ENCODE measurements at regions of chr2 and their contacts with region 1.

Region 1: DNA sequence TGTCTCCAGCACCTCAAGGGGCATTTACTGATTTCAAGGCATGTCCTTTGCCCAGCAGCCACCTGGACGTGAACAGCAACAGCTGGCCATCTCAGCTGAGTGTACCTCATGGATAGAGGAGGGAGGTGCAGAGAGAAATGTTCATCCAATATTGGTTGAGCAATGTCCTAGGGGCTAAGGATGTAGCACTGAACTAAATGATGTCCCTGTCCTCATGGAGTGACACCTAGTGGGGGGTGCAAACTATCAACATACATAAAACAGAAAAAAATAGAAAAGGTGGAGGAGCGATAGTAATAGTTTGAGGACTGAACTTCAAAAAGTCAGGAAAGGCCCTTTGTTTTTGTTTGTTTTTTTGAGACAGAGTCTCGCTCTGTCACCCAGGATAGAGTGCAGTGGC is 4.8 kb upstream of the UGGT1 start:
- DNase-seq: no peak
- ATAC-seq: no peak
- H3K4me3 ChIP-seq: no peak overlapping the region
- H3K27ac ChIP-seq: no peak overlapping the region
- H3K4me1 ChIP-seq: no peaks in the 10 kb centered on the region
- H3K27me3 ChIP-seq: no peaks in the 10 kb centered on the region
- CTCF ChIP-seq: no peak
- POLR2A ChIP-seq: no peak

Region 2: GRCh38 chr2:128037649-128038048 is 48.6 kb before region 1 on chr2:
- intact Hi-C with region 1: loop called (anchors 10 kb)
- DNase-seq: no peak
- ATAC-seq: no peak
- H3K4me3 ChIP-seq: no peak overlapping the region
- H3K27ac ChIP-seq: no peak overlapping the region
- H3K4me1 ChIP-seq: no peaks in the 10 kb centered on the region
- H3K27me3 ChIP-seq: no peaks in the 10 kb centered on the region
- CTCF ChIP-seq: no peak
- POLR2A ChIP-seq: no peak

Region 3: GRCh38 chr2:128442053-128442751 is 356.0 kb after region 1 on chr2:
- intact Hi-C with region 1: no loop called
- DNase-seq: peak; percentile 32 to 67 (median 46)
- ATAC-seq: no peak
- H3K4me3 ChIP-seq: no peak overlapping the region
- H3K27ac ChIP-seq: peak overlapping the region in 3 of 4 donors; percentile 6 to 54 (median 45)
- H3K4me1 ChIP-seq: peaks cover 34% of the 10 kb centered on the region
- H3K27me3 ChIP-seq: no peaks in the 10 kb centered on the region
- CTCF ChIP-seq: no peak
- POLR2A ChIP-seq: no peak

Measured in body of pancreas (tissue), 4 donors.